Activated T-helper 2 cell treated with anti-CD3 and anti-CD28 coated beads, Interferon-gamma antibody, Interleukin-2, Interleukin-4, amounts not matched to agents 10 μg/mL and 5 μg/mL and 100 μg/mL, durations not matched to agents 14 hours and 24 hours and 36 hours (primary cell): ENCODE measurements at regions of chr19 and their contacts with region 1.

Region 1: GRCh38 chr19:55062734-55063492 is at the start of gene RDH13:
- DNase-seq: peak; percentile 96
- H3K4me3 Mint-ChIP-seq: peak within 1 kb of the TSS; percentile 91
- H3K27ac Mint-ChIP-seq: peak within 1 kb of the TSS; percentile 71
- H3K4me1 Mint-ChIP-seq: peaks cover 4% of the 10 kb centered on the region
- H3K27me3 Mint-ChIP-seq: peaks cover 24% of the 10 kb centered on the region
- total RNA-seq, gene RDH13: 18.3 and 18.9 TPM in 2 replicates

Region 2: DNA sequence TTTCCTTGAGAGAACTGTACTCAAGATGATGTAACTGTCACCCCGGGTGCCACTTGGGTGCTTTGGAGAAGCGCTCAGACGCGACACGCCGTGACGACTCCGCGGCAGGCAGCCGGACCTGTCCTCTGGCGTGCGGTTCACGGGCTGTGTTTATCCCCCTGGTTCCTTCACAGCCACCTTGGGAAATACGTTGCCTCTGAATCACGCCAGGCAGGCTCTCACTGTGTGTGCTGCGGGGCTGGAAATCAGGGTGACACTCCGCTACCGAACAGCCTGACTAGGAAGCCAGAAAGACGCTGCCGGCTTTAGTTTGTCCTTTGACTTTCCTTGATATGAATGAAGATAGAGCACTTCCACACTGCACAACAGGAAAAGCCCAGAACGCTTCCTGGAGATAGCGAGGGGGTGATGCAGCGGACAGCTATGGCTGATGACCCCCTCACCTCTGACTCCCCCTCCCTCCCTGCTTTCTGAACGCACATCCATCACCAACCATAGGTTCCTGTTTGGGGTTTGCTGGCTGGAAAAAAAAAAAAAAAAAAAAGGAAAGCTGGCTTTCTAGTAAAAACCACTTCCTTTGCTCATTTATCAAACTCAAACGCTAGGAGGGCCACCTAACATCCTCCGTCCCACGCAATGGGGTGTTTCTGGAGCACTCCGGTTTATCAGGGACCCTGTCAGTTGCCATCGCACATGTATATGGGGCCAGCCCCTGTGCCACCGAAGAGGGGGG is 21.1 kb before region 1 on chr19:
- intact Hi-C with region 1: loop called (anchors 2 kb)
- DNase-seq: peak; percentile 35
- H3K4me3 Mint-ChIP-seq: peak overlapping the region; percentile 71
- H3K27ac Mint-ChIP-seq: peak overlapping the region; percentile 81
- H3K4me1 Mint-ChIP-seq: peaks cover 18% of the 10 kb centered on the region
- H3K27me3 Mint-ChIP-seq: no peaks in the 10 kb centered on the region